Heart right ventricle (tissue), 16 donors: ENCODE measurements at regions of chr15 and their contacts with region 1.

Region 1: DNA sequence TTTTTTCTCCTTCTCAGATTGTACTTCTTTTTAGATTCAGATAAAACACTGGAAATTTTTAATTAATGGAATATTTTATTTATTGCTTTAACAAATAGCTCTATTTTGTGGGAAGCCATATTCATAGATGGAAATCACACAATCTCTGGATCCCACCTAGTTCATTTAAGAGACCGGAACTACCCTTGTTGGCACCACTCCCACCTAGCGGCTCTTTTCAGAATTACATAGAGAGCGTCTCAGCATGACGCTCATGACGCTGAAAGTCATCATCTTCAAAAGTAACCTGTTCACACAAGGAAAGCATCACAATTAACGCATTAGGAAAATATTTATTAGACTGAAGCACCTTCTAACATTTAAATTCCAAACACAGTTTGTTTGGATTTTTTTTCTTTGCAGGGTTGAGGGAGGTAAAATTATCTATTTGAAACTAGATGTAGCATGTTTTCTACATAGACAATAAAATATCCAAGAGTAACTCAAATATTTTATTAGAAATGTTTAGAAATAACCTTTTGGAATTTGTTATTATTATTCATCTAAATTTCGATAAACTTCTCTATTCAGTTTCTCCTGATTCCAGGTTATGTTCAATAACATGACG is 214.9 kb upstream of the ARRDC4 start:
- DNase-seq: peak in 1 of 2 donors; percentile 9
- ATAC-seq: no peak
- H3K4me3 ChIP-seq: no peak overlapping the region
- H3K27ac ChIP-seq: no peak overlapping the region
- H3K4me1 ChIP-seq: no peaks in the 10 kb centered on the region
- H3K27me3 ChIP-seq: no peaks in the 10 kb centered on the region
- CTCF ChIP-seq: peak; percentile 32 to 72 (median 61)

Region 2: GRCh38 chr15:96365781-96366525 is 1379.6 kb before region 1 on chr15:
- intact Hi-C with region 1: loop called in 2 of 10 experiments (anchors 5 to 10 kb)
- DNase-seq: no peak
- ATAC-seq: no peak
- H3K4me3 ChIP-seq: no peak overlapping the region
- H3K27ac ChIP-seq: no peak overlapping the region
- H3K4me1 ChIP-seq: peaks cover 0 to 12% (median 5%) of the 10 kb centered on the region in 9 donors
- H3K27me3 ChIP-seq: peaks cover 6 to 99% (median 86%) of the 10 kb centered on the region in 7 donors
- CTCF ChIP-seq: no peak

Region 3: GRCh38 chr15:97234851-97235610 is 510.5 kb before region 1 on chr15:
- intact Hi-C with region 1: loop called in 1 of 10 experiments (anchors 10 kb)
- DNase-seq: peak; percentile 15 to 44
- ATAC-seq: peak in 3 of 8 donors; percentile 63 to 65 (median 63)
- H3K4me3 ChIP-seq: peak overlapping the region in 1 of 10 donors; percentile 6
- H3K27ac ChIP-seq: no peak overlapping the region
- H3K4me1 ChIP-seq: peaks cover 0 to 4% (median 0%) of the 10 kb centered on the region in 9 donors
- H3K27me3 ChIP-seq: peaks cover 0 to 9% (median 0%) of the 10 kb centered on the region in 7 donors
- CTCF ChIP-seq: peak; percentile 65 to 89 (median 86)